IMR-90 (cell line): ENCODE measurements at regions of chr4 and their contacts with region 1.

Region 1: GRCh38 chr4:184568770-184569169 is 80.5 kb downstream of the CASP3 start:
- DNase-seq: no peak
- ATAC-seq: no peak
- H3K4me3 ChIP-seq: no peak overlapping the region
- H3K27ac ChIP-seq: no peak overlapping the region
- H3K4me1 ChIP-seq: no peaks in the 10 kb centered on the region
- H3K27me3 ChIP-seq: no peaks in the 10 kb centered on the region; the same call in 1 of the 2 replicates
- CTCF ChIP-seq: no peak
- POLR2A ChIP-seq: no peak
- RAD21 ChIP-seq: no peak

Region 2: GRCh38 chr4:184632842-184633241 is 64.1 kb after region 1 on chr4:
- CTCF ChIA-PET with region 1: interaction called, 10 read pairs
- POLR2A ChIA-PET with region 1: no interaction called
- dilution Hi-C with region 1: no loop called
- in situ Hi-C with region 1: no loop called
- intact Hi-C with region 1: no loop called
- DNase-seq: no peak
- ATAC-seq: no peak
- H3K4me3 ChIP-seq: no peak overlapping the region
- H3K27ac ChIP-seq: no peak overlapping the region
- H3K4me1 ChIP-seq: no peaks in the 10 kb centered on the region; the same call in 1 of the 2 replicates
- H3K27me3 ChIP-seq: no peaks in the 10 kb centered on the region
- CTCF ChIP-seq: no peak
- POLR2A ChIP-seq: no peak
- RAD21 ChIP-seq: no peak

Region 3: DNA sequence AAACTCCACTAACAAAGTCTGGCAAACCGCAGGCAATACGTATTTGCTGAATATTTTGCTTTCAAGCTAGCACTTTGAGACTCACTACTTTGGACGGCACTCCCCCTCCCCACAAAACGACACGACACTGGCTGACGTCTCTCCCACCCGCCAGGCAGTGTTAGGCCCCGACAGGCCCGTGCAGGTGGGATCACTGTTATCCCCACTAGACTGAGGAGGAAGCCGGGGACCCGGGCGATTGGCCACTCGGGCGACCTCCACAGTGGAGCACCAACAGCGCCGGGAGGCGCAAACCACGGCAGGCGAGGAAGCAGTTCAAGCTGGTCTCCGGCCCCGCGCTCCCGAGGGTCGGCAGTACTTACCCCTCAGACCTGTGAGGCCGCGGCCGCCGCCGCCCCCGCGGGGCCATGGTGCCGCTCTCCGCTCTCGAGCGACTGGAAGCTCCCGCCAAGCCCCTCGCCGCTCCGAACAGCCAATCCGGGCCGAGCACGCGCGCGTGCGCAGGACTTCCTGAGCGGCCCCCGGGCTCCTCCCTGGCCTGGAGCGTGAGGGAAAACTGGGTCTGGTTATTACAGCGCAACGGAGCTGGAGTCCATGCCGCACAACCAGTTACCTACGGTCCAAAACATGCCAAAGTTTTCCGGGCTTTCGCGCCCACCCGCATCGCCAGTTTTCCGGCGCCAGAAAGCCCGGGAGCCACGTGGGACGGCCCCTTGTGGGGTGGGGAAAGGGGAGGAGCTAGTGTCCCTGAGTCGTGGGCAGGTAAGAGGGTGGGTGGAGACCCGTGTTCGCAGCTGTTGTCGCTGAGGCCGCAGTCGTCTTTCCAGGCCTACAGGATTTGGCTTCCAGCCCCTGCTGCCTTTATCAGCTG is 165.1 kb after region 1 on chr4 and contains the start of gene CENPU:
- CTCF ChIA-PET with region 1: no interaction called
- POLR2A ChIA-PET with region 1: no interaction called
- dilution Hi-C with region 1: no loop called
- in situ Hi-C with region 1: no loop called
- intact Hi-C with region 1: no loop called
- DNase-seq: peak; percentile 98
- ATAC-seq: peak; percentile 98
- H3K4me3 ChIP-seq: peak within 1 kb of the TSS; percentile 74
- H3K27ac ChIP-seq: peak within 1 kb of the TSS; percentile 11; the same call in 1 of the 2 replicates
- H3K4me1 ChIP-seq: peaks cover 4% of the 10 kb centered on the region
- H3K27me3 ChIP-seq: no peaks in the 10 kb centered on the region
- CTCF ChIP-seq: no peak
- POLR2A ChIP-seq: no peak; the same call in 1 of the 2 replicates
- RAD21 ChIP-seq: no peak
- total RNA-seq, gene CENPU: 13.6 and 26.7 TPM in 2 replicates